ENCODE measurements at regions of chr7 and their contacts with region 1.

Region 1: DNA sequence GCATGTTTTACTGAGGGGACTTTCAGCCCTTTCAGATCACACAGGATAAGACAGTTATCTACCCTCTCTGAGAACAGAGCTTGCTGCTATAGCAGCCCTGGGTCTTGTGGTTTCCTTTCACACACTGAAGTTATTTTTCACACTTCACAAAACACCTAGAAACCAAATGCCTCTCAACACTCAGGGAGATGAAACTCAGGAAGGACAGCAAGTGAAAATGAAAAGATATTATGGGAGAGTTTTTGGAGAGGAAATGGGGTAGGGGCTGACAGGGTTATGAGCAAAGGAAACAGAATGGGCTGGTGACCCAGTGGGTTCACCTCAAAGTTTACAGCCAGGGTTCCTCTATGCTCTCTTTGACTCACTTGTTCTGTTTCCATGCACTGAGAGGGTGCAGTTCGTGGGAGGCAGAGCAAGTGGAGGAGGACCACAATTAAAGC is 17.0 kb upstream of the GIMAP2 start:
- DNase-seq: peak; percentile 67
- H3K4me3 Mint-ChIP-seq: peak overlapping the region; percentile 31
- H3K27ac Mint-ChIP-seq: peak overlapping the region; percentile 92
- H3K4me1 Mint-ChIP-seq: peaks cover 71% of the 10 kb centered on the region
- H3K27me3 Mint-ChIP-seq: no peaks in the 10 kb centered on the region

Region 2: DNA sequence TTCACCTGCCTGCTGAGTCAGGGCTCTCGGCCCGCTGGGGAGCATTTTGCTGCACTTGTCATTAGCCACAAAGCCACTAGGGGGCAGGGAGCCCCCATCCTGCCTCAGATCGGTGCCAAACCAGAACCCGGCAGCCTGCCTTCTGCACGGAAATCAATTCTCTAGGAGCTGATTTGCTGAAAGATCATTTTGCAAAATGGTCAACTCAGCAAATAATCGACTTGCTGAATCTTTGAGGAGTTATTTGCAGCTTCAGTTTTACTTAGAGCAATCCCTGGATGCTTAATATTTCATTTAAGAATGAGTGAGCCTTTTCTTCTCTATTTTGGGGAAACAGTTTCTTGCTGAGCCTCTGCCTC is 219.7 kb before region 1 on chr7:
- intact Hi-C with region 1: loop called (anchors 1 kb)
- DNase-seq: peak; percentile 81
- H3K4me3 Mint-ChIP-seq: peak overlapping the region; percentile 54
- H3K27ac Mint-ChIP-seq: peak overlapping the region; percentile 78
- H3K4me1 Mint-ChIP-seq: peaks cover 53% of the 10 kb centered on the region
- H3K27me3 Mint-ChIP-seq: no peaks in the 10 kb centered on the region

Region 3: DNA sequence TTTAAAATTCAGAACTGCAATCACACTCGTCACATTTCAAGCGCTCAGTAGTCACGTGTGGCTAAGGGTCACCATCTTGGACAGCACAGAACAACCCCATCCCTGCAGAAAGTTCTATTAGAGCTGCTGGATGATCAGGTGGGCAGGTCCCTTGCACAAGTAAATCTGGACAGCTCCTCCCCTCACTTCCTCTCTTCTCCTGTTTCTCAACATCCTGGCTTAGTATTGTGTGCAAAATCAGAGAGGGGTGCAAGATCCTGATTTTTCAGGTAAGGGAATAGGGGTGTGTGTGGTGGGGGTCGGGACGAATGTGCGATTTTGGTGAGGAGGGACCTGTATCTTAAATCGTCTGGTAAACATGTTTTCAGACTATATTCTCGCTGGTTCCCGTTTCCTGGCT is 101.3 kb before region 1 on chr7 and contains the start of gene GIMAP4:
- intact Hi-C with region 1: loop called (anchors 2 kb)
- DNase-seq: no peak
- H3K4me3 Mint-ChIP-seq: peak within 1 kb of the TSS; percentile 89
- H3K27ac Mint-ChIP-seq: peak within 1 kb of the TSS; percentile 97
- H3K4me1 Mint-ChIP-seq: peaks cover 52% of the 10 kb centered on the region
- H3K27me3 Mint-ChIP-seq: no peaks in the 10 kb centered on the region
- total RNA-seq, gene GIMAP4: 36.7 and 39.1 TPM in 2 replicates

Region 4: DNA sequence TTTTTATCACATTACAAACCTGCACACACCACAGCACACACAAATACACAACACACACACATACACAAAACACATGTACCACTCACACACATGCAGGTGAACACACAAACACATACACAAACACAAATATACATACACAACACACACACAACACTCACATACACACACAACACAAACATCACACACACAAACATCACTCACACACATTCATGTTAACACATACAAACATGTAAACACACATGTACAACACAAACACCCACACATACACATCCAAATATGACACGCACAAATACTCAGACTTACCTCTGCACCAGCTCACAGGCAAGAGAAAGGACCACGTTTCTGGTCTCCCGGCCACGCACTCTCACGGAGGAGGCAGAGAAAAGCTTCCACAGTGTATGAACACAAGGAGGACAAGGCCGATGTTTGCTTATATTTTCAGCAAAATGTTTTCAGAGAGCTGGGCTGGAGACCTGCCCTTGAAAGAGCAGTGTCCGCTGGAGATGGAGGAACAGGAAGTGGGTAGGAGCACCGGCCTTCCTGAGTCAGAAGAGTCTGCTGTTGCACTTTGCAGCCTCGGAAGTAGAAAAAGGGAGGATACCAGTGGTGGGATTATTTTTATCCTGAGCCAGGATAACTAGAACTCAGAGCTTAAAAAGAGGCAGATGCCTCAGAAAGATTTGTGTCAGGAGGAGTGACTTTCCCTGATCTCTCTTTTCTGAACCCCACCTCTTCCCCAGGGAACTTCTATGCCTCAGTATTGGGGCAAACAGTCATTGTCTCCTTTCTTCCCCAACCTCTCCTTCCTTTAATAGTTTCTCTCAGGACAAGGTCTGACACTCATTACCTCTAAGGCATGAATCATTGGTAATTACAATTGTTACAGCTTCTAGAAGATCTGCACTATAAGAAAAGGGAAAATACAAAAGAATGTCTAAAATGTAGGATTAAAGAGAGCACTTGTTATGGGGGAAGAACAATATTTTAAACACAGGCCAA is 36.3 kb before region 1 on chr7 and contains the start of gene GIMAP6:
- intact Hi-C with region 1: loop called (anchors 1 kb)
- DNase-seq: no peak
- H3K4me3 Mint-ChIP-seq: peak within 1 kb of the TSS; percentile 90
- H3K27ac Mint-ChIP-seq: peak within 1 kb of the TSS; percentile 84
- H3K4me1 Mint-ChIP-seq: peaks cover 53% of the 10 kb centered on the region
- H3K27me3 Mint-ChIP-seq: no peaks in the 10 kb centered on the region
- total RNA-seq, gene GIMAP6: 25.8 and 29.4 TPM in 2 replicates

Region 5: GRCh38 chr7:150737265-150738055 is 69.0 kb after region 1 on chr7 and contains the start of gene GIMAP5:
- intact Hi-C with region 1: loop called (anchors 1 kb)
- DNase-seq: peak; percentile 44
- H3K4me3 Mint-ChIP-seq: peak within 1 kb of the TSS; percentile 91
- H3K27ac Mint-ChIP-seq: peak within 1 kb of the TSS; percentile 91
- H3K4me1 Mint-ChIP-seq: peaks cover 78% of the 10 kb centered on the region
- H3K27me3 Mint-ChIP-seq: no peaks in the 10 kb centered on the region
- total RNA-seq, gene GIMAP5: 42.9 and 46.7 TPM in 2 replicates

Region 6: GRCh38 chr7:151110941-151111645 is 442.6 kb after region 1 on chr7:
- intact Hi-C with region 1: no loop called
- DNase-seq: peak; percentile 55
- H3K4me3 Mint-ChIP-seq: no peak overlapping the region
- H3K27ac Mint-ChIP-seq: no peak overlapping the region
- H3K4me1 Mint-ChIP-seq: no peaks in the 10 kb centered on the region
- H3K27me3 Mint-ChIP-seq: peaks cover 5% of the 10 kb centered on the region